Tibial artery (tissue), 4 donors: ENCODE measurements at regions of chr1 and their contacts with region 1.

Region 1: GRCh38 chr1:12124693-12125421 is 41.9 kb upstream of the TNFRSF1B start:
- DNase-seq: peak; percentile 83
- H3K4me3 ChIP-seq: no peak overlapping the region
- H3K27ac ChIP-seq: no peak overlapping the region
- H3K4me1 ChIP-seq: no peaks in the 10 kb centered on the region
- H3K27me3 ChIP-seq: peaks cover 0 to 20% of the 10 kb centered on the region in 2 donors
- CTCF ChIP-seq: peak; percentile 96 to 97

Region 2: DNA sequence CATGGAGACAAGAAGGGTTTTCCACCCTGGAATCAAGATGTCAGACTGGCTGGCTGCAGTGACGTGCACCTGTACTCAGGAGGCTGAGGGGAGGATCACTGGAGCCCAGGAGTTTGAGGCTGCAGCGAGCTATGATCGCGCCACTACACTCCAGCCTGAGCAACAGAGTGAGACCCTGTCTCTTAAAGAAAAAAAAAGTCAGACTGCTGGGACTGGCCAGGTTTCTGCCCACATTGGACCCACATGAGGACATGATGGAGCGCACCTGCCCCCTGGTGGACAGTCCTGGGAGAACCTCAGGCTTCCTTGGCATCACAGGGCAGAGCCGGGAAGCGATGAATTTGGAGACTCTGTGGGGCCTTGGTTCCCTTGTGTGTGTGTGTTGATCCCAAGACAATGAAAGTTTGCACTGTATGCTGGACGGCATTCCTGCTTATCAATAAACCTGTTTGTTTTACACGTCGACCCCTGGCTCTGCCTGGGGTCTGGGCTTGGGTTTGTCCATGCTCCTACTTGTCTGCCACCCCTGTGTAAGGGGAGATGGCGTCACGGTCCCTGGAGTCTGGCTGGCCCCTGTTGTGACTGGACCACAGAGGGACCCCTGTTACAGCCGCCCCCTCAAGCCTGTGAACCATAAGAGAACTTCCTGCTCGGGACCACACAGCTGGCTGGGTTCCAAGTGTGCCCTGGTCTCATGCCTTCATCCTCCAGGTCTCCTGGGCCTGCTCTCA is 84.1 kb after region 1 on chr1:
- intact Hi-C with region 1: loop called (anchors 2 kb)
- DNase-seq: peak; percentile 87 to 90
- H3K4me3 ChIP-seq: no peak overlapping the region
- H3K27ac ChIP-seq: no peak overlapping the region
- H3K4me1 ChIP-seq: peaks cover 0 to 9% (median 0%) of the 10 kb centered on the region in 4 donors
- H3K27me3 ChIP-seq: peaks cover 0 to 3% of the 10 kb centered on the region in 2 donors
- CTCF ChIP-seq: peak; percentile 92 to 97

Region 3: DNA sequence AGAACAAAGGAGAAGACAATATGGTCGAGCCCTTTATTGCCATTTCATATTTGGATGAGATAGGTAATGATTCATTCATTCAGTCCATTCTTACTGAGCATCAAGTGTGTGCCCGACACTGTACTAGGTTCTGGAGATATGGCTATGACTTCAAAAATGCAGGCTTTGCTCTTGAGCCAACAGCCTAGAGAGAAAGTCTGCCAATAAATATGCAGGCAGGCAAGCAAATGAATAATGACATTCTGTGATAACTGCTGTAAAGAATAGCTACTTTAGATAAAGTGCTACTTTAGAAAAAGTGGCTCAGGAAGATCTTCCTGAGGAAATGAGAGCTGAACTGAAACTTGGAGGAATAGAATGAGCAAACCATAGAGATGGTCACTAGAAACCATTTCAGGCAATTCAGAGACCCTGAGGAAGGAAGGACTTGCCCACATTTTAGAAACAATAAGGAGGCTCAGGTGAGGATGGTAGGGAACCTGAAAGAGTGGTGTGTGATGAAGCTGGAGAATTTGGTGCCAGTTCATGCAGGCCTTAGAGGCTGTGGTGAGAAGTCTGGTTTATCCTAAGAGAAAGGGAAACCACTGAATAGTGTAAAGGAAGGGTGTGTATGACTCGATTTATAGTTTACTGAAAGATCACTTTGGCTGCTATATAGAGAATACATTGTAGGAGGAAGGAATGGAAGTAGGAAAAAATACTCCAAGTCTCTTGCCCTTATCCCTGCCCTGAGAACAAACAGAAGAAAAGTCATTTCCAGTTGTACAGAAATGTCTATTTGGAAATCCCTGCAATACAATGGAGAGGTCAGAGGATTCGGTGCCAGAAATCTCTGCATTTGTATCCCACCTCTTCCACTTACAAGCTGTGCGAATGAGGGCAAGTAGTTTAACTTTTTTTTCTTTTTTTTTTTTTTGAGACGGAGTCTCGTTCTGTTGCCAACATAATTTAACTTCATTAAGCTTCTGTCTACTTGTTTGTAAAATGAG is 272.9 kb after region 1 on chr1:
- intact Hi-C with region 1: no loop called
- DNase-seq: no peak
- H3K4me3 ChIP-seq: no peak overlapping the region
- H3K27ac ChIP-seq: no peak overlapping the region
- H3K4me1 ChIP-seq: peaks cover 0 to 9% (median 4%) of the 10 kb centered on the region in 4 donors
- H3K27me3 ChIP-seq: no peaks in the 10 kb centered on the region
- CTCF ChIP-seq: no peak

Region 4: GRCh38 chr1:12669529-12670068 is 544.7 kb after region 1 on chr1:
- intact Hi-C with region 1: loop called (anchors 10 kb)
- DNase-seq: no peak
- H3K4me3 ChIP-seq: no peak overlapping the region
- H3K27ac ChIP-seq: no peak overlapping the region
- H3K4me1 ChIP-seq: no peaks in the 10 kb centered on the region
- H3K27me3 ChIP-seq: peaks cover 0 to 4% of the 10 kb centered on the region in 2 donors
- CTCF ChIP-seq: no peak